ENCODE measurements at regions of chr5 and their contacts with region 1.

Region 1: GRCh38 chr5:13987843-13988464 is 43.5 kb upstream of the DNAH5 start:
- ATAC-seq: peak in 4 of 8 experiments; percentile 32 to 67 (median 62)
- H3K4me3 ChIP-seq: no peak overlapping the region
- H3K27ac ChIP-seq: no peak overlapping the region
- H3K4me1 ChIP-seq: no peaks in the 10 kb centered on the region

Region 2: DNA sequence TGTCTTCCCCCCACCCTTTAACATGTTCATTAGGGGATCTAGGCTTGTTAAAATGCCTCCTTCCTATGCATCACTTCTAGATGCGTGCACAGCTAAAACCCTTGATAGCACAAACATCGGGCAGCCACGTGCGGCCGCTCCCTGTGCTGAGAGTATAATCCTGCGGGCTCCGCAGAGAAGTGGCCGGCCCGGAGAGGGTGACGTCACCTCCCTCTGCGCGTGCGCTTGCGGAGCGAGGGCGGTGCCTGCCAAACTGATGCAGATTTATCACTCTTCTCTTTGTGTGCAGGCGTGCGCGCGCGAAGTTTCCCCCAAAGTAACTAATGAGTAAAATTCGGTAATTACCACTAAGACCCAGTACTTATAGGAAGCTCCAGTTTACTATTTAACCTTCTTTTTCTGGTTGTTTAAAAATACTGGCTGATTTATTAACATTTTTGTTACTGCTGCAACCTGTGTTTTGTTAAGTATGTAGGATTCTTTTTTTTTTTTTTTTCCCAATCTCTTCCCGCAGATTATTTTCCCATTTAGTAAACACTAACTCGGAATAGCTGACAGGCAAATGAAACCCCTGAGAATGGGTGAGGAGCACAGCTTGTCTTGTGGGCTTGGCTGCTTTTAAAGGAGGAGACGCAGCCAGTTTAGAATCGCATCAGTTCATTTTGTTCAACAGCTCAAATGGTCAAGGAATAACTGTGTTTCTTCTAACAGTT is 276.8 kb after region 1 on chr5:
- in situ Hi-C with region 1: loop called in 2 of 9 experiments (anchors 25 kb)
- ATAC-seq: peak; percentile 86 to 98 (median 94)
- H3K4me3 ChIP-seq: peak overlapping the region; percentile 23 to 34 (median 28)
- H3K27ac ChIP-seq: peak overlapping the region in 1 of 2 donors; percentile 11
- H3K4me1 ChIP-seq: peaks cover 50 to 56% of the 10 kb centered on the region in 2 donors

Region 3: DNA sequence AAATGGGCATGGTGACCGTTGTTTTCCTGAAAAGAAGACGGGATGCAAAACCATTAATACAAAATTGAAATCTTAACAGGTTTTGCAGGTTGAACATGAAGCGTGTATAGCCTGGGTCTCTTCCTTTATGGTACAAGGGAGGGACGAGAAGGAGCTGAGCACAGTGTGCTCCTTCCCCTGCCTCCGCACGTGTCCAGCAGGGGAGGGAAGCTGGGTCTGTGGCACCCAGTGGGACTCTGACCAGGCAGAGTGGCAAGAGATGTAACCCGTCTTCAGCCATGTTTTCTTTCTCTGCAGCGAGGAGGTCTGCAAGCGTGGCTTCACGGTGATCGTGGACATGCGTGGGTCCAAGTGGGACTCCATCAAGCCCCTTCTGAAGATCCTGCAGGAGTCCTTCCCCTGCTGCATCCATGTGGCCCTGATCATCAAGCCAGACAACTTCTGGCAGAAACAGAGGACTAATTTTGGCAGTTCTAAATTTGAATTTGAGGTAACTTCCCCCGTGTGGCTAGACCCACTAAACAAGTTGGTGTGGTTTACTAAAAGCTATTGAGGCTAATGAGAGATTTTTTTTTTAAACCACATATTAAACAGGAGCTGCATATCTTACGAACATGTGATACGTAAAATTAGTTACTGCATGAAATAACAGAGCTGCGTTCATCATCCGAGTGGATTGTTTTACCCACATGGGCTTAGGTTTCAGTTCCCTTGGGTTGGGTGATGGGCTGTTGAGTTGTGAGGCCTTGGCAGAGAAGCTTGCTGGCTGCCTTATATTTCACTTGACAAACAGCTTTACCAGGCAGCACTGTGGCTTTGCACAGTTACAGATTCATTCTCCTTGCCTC is 298.8 kb after region 1 on chr5:
- in situ Hi-C with region 1: loop called in 1 of 9 experiments (anchors 25 kb)
- ATAC-seq: no peak
- H3K4me3 ChIP-seq: no peak overlapping the region
- H3K27ac ChIP-seq: no peak overlapping the region
- H3K4me1 ChIP-seq: peaks cover 22 to 23% of the 10 kb centered on the region in 2 donors

Region 4: DNA sequence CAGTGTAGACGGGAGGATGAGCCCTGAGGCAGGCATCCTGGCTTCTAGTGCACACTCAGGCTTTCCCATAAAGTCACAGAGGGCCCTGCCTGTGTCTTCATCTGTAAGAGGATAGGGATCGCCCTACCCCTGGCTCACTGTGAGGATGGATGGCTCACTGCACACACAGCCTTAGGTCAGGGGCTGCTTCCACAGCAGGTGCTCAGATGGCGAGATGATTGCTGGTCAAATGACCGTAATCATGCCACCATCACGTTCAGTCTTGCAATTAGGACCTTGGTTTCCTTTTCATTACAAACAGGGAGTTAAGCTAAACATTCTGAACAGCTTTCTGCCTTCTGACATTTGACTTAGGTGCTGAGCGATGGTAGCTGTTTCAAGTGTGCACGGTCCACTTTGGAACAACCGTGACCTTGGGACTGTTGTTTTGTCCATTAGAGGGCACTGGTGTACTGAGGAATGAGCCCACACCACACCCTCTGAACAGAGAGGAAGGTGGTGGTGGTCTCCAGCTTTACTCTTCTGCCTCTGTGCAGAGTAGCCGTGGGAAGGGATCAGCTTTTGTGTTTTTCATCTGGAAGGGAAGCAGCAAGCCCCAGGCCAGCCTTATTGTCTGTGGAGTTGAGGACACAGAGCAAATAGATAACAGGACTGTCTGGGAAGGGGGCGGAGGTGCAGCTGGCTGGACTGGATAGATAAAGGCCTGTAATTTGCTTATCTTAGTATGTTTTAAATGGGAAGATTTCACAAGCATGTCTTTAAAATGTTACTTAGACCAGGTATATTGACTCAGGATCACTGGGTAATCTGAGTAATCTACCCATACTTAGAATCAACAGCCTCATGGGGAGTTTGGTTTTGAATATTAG is 338.3 kb after region 1 on chr5:
- in situ Hi-C with region 1: loop called in 2 of 9 experiments (anchors 25 kb)
- ATAC-seq: peak in 5 of 8 experiments; percentile 25 to 76 (median 26)
- H3K4me3 ChIP-seq: no peak overlapping the region
- H3K27ac ChIP-seq: no peak overlapping the region
- H3K4me1 ChIP-seq: no peaks in the 10 kb centered on the region

Region 5: GRCh38 chr5:14351845-14352712 is 364.1 kb after region 1 on chr5:
- in situ Hi-C with region 1: loop called in 4 of 9 experiments (anchors 25 kb)
- ATAC-seq: peak; percentile 91 to 98 (median 96)
- H3K4me3 ChIP-seq: no peak overlapping the region
- H3K27ac ChIP-seq: no peak overlapping the region
- H3K4me1 ChIP-seq: peaks cover 8 to 11% of the 10 kb centered on the region in 2 donors

Region 6: GRCh38 chr5:14628346-14628745 is 640.4 kb after region 1 on chr5:
- in situ Hi-C with region 1: loop called in 4 of 9 experiments (anchors 25 kb)
- ATAC-seq: peak in 4 of 8 experiments; percentile 43 to 79 (median 69)
- H3K4me3 ChIP-seq: no peak overlapping the region
- H3K27ac ChIP-seq: no peak overlapping the region
- H3K4me1 ChIP-seq: peaks cover 0 to 3% of the 10 kb centered on the region in 2 donors

Region 7: DNA sequence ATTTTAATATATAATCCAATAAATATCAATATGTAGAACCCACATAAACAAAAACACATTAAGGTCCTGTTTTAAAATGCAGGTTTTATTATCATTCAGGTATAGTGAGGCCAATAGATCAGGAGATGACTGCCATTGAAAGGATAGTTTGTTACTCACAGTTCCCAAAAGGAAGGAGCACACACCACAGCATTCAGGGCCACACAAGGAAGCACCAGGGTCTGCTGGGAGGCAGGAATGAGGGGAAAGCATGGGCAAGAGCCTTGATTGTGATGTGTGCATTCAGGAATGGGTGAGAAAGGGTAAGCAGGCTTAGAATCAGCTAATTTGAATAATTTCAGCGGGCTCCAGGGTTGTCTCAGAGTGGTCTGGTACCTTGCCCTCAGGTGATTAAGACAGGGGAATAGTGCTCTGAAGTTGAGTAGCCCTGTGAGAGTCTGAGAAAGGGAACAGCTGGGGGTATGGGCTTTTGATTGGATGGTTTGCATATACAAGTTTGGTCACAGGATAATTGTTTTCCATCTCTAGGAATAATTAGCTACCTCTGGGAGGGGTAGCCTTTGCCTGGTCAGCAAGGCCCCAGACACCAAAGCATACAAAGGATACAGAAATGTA is 656.8 kb after region 1 on chr5:
- in situ Hi-C with region 1: loop called in 5 of 9 experiments (anchors 10 to 25 kb)
- ATAC-seq: no peak
- H3K4me3 ChIP-seq: no peak overlapping the region
- H3K27ac ChIP-seq: no peak overlapping the region
- H3K4me1 ChIP-seq: no peaks in the 10 kb centered on the region

Measured in motor neuron (in vitro differentiated cells).